MCF 10A (cell line): ENCODE measurements at regions of chrX and their contacts with region 1.

Region 1: DNA sequence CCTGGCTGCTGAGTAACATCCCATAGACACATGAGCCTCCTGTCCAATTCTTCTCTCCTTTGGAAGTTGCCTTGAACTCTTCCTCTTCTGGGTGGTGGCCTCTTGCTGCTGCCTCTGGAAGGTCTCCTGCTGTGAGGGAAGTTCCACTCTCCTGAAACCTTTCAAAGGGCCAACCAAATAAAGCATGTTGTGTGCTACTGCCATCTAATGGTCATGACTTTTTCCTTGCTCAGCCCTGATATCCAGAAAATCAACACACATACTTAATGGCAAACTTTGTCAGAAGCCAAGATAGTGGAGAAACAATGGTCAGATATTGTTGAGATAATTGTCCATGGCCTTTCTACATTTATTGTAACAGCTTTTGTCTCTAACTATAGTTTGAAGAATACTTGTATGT is 19.1 kb upstream of the ZXDA start:
- DNase-seq: peak; percentile 40
- H3K4me3 Mint-ChIP-seq: no peak overlapping the region
- H3K27ac Mint-ChIP-seq: no peak overlapping the region
- H3K4me1 Mint-ChIP-seq: peaks cover 5% of the 10 kb centered on the region
- H3K27me3 Mint-ChIP-seq: peaks cover 14% of the 10 kb centered on the region
- CTCF ChIP-seq: peak; percentile 33

Region 2: DNA sequence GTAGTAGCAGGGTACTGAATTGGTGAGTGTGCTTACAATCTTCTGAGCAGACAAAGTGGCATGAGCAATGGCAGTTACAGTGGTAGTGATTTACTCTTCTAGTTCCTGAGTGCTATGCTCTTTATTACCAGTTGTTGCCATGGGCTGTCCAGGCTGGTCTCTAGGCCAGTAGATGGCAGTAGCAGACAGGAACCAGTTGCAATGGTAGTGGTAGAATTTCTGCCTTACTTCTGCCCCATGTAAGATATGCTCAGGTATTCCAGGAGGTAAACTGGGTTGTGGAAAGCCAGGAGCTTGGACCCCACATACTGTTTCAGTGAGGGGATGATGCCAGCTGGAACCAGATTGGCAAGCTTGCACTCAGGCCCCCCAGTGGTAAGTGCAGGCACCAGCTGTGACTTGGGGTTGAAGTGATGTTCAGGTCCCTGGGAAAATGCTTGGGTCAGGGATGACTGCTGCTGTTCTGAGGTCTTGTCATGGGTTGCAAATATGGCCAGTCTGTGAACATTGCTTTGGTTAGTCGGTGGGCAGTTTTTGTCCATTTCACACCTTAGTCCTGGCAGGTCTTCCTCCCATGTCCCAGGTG is 400.6 kb before region 1 on chrX:
- CTCF ChIA-PET with region 1: interaction called, 3 read pairs
- POLR2A ChIA-PET with region 1: no interaction called
- intact Hi-C with region 1: loop called (anchors 5 kb)
- DNase-seq: peak; percentile 42
- H3K4me3 Mint-ChIP-seq: no peak overlapping the region
- H3K27ac Mint-ChIP-seq: no peak overlapping the region
- H3K4me1 Mint-ChIP-seq: no peaks in the 10 kb centered on the region
- H3K27me3 Mint-ChIP-seq: peaks cover 64% of the 10 kb centered on the region
- CTCF ChIP-seq: peak; percentile 49

Region 3: DNA sequence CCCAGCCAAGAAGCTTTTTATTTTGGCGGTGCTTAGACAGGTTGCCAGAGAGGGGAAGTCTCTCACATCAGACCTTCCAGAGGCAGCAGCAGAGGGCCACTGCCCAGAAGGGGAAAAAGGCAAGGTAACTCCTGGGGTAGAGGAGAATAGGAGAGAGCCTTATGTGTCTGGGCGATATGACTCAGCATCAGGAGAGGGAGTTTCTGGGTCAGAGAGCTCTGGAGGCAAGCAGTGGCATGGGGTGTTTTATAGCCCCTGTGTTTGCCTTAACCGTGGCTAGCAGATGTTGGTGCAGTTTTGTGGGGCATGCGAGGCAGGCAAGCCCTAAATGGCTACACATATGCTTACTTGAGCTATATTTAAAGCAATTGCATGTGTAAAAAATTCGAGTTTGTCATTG is 345.9 kb before region 1 on chrX:
- CTCF ChIA-PET with region 1: interaction called, 5 read pairs
- POLR2A ChIA-PET with region 1: no interaction called
- intact Hi-C with region 1: loop called (anchors 5 kb)
- DNase-seq: no peak
- H3K4me3 Mint-ChIP-seq: no peak overlapping the region
- H3K27ac Mint-ChIP-seq: no peak overlapping the region
- H3K4me1 Mint-ChIP-seq: no peaks in the 10 kb centered on the region
- H3K27me3 Mint-ChIP-seq: no peaks in the 10 kb centered on the region
- CTCF ChIP-seq: no peak